Tibial artery (tissue), 4 donors: ENCODE measurements at regions of chr16 and their contacts with region 1.

Region 1: GRCh38 chr16:31678649-31679325 is 151.1 kb downstream of the AHSP start:
- DNase-seq: no peak
- H3K4me3 ChIP-seq: no peak overlapping the region
- H3K27ac ChIP-seq: no peak overlapping the region
- H3K4me1 ChIP-seq: no peaks in the 10 kb centered on the region
- H3K27me3 ChIP-seq: no peaks in the 10 kb centered on the region
- CTCF ChIP-seq: no peak

Region 2: DNA sequence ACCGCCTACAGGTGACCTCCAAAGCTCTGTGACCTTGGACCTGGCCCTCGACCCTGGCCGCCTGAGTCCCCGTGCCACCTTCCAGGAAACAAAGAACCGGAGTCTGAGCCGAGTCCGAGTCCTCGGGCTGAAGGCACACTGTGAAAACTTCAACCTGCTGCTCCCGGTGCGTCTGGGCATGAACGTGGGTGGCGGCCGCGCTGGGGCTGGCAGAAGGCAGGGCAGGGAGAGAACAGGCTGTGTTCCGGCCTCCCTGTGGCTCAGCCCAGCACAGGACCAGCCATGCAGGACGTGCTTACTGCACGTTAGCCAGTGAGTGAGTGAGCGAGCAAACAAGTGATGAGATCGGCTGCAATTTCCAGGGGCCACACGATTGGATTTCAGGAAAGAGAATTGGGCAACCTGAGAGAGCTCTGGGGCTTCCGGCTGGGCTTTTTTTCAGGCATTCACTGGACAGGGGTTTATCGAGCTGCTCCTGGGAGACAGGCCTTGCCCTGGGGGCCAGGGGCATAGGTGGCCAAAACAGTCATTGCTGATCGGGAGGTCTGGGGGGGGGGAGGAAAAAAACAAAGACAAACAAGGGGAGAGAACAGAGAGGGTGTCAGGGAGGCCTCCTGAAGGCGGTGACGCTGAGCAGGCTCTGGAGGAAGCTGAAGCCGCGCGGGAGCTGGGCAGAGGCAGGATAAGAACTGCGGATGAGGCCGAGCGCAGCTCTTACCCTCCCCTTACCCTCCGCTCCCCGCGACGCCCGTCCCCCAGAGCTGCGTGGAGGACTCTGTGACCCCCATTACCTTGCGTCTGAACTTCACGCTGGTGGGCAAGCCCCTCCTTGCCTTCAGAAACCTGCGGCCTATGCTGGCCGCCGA is 306.9 kb before region 1 on chr16:
- intact Hi-C with region 1: no loop called
- DNase-seq: no peak
- H3K4me3 ChIP-seq: no peak overlapping the region
- H3K27ac ChIP-seq: no peak overlapping the region
- H3K4me1 ChIP-seq: no peaks in the 10 kb centered on the region
- H3K27me3 ChIP-seq: peaks cover 0 to 4% of the 10 kb centered on the region in 2 donors
- CTCF ChIP-seq: no peak

Region 3: GRCh38 chr16:31618130-31618529 is 60.7 kb before region 1 on chr16:
- intact Hi-C with region 1: loop called (anchors 10 kb)
- DNase-seq: no peak
- H3K4me3 ChIP-seq: no peak overlapping the region
- H3K27ac ChIP-seq: no peak overlapping the region
- H3K4me1 ChIP-seq: no peaks in the 10 kb centered on the region
- H3K27me3 ChIP-seq: no peaks in the 10 kb centered on the region
- CTCF ChIP-seq: no peak